CD4-positive, alpha-beta T cell (primary cell): ENCODE measurements at regions of chr16 and their contacts with region 1.

Region 1: DNA sequence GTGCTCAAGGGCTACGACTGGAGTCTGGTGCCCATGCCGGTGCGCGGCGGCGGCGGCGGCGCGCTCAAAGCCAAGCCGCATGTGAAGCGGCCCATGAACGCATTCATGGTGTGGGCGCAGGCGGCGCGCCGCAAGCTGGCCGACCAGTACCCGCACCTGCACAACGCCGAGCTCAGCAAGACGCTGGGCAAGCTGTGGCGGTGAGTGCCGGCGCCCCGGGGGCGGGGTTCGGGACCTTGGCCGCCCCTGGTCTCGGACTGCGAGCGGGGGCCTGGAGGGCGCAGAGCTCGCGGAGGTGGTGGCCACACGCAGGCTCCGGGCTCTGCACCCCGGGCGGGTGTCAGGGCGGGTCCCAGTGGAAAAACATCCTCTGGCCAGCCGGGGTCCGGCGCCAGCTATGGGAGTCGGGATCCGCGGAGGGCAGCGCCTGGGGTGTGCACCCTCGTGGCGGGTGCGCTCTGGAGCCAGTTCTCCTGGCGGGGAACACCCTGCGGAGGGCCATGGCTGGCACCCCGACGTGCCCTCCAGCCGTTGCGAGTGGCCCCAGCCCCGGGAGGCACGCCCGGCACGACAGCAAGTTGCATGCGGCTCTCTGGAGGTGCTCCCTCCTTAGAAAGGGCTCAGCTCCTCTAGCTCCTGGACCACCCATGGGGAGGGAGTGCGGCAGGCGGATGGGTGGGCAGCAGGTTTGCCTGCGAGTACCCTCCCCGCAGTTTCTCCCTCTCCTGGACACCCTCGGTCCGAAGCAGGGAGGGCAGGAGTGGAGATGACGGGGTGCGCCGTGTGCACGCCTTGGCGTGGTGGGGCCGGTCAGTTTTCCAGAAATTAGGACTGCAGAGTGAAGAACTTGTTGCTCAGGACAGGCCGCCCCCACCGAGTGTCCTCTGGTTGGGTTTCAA is 824 bp downstream of the SOX8 start:
- DNase-seq: peak in 3 of 14 experiments; percentile 45 to 61 (median 60)
- ATAC-seq: peak; percentile 22
- H3K4me3 ChIP-seq: peak overlapping the region; percentile 20
- H3K4me3 Mint-ChIP-seq: peak overlapping the region; percentile 79
- H3K27ac ChIP-seq: no peak overlapping the region
- H3K27ac Mint-ChIP-seq: no peak overlapping the region
- H3K4me1 ChIP-seq: peaks cover 29% of the 10 kb centered on the region
- H3K4me1 Mint-ChIP-seq: peaks cover 7% of the 10 kb centered on the region
- H3K27me3 ChIP-seq: peaks cover 0 to 10% of the 10 kb centered on the region in 2 experiments
- H3K27me3 Mint-ChIP-seq: no peaks in the 10 kb centered on the region
- CTCF ChIP-seq: no peak

Region 2: DNA sequence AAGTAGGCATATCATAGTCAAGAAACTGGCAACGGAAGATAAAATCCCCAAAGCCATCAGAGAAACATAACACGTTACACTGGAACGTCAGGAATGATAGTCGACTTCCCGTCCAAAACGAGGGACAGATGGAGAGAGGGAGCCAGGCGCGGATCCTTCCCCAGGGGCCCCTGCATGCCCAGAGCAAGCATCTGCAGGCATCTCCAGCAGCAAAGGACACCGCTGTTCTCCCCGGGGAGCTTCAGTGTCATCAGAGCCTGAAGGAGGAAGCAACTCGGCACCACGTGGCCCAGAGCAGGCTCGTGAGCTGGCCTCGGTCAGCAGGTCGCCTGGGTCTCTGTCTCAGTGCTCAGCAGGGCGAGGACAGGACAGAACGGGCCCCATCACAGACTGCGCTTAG is 61.7 kb before region 1 on chr16:
- CTCF ChIA-PET with region 1: no interaction called
- POLR2A ChIA-PET with region 1: no interaction called
- intact Hi-C with region 1: no loop called
- DNase-seq: no peak
- ATAC-seq: no peak
- H3K4me3 ChIP-seq: no peak overlapping the region
- H3K4me3 Mint-ChIP-seq: no peak overlapping the region
- H3K27ac ChIP-seq: no peak overlapping the region
- H3K27ac Mint-ChIP-seq: no peak overlapping the region
- H3K4me1 ChIP-seq: no peaks in the 10 kb centered on the region
- H3K4me1 Mint-ChIP-seq: no peaks in the 10 kb centered on the region
- H3K27me3 ChIP-seq: no peaks in the 10 kb centered on the region
- H3K27me3 Mint-ChIP-seq: no peaks in the 10 kb centered on the region
- CTCF ChIP-seq: no peak

Region 3: GRCh38 chr16:951660-952301 is 30.6 kb before region 1 on chr16:
- CTCF ChIA-PET with region 1: no interaction called
- POLR2A ChIA-PET with region 1: no interaction called
- intact Hi-C with region 1: no loop called
- DNase-seq: no peak
- ATAC-seq: no peak
- H3K4me3 ChIP-seq: no peak overlapping the region
- H3K4me3 Mint-ChIP-seq: no peak overlapping the region
- H3K27ac ChIP-seq: no peak overlapping the region
- H3K27ac Mint-ChIP-seq: no peak overlapping the region
- H3K4me1 ChIP-seq: peaks cover 3% of the 10 kb centered on the region
- H3K4me1 Mint-ChIP-seq: peaks cover 10% of the 10 kb centered on the region
- H3K27me3 ChIP-seq: no peaks in the 10 kb centered on the region
- H3K27me3 Mint-ChIP-seq: no peaks in the 10 kb centered on the region
- CTCF ChIP-seq: no peak

Region 4: DNA sequence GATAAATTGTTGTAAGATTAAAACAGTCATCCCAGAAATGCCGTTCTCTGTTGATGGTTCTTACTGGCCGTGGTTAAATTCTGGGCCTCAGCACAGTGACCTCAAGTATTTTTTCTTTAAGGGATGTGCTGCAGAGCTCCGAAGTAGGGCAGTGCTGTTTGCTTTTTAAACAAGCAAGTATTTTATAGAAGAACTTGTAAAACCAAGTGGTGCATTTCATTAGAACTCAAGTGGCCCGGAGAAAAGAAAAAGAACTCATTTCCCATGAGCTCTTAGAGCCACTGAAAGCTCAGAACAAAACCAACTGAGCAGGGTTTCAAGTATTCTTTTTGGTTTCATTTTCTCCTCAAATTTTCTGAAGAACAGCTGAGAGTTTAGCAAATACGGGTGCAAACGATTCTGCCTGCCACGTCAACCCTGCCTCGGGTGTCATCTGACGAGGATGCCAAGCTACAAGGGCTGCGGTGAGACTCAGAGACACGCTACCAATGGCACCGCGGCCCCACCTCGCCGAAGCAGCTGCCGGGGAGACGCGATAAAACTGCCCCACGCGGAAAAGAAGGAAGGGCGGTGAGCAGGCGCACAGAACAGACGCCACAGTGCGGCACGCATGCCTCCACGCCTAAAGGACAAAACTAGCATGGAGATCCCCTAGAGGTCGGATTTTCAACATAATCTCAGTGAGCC is 17.9 kb before region 1 on chr16:
- CTCF ChIA-PET with region 1: no interaction called
- POLR2A ChIA-PET with region 1: interaction called, 49 read pairs
- intact Hi-C with region 1: no loop called
- DNase-seq: peak; percentile 69 to 96 (median 73)
- ATAC-seq: peak; percentile 92
- H3K4me3 ChIP-seq: peak overlapping the region; percentile 49
- H3K4me3 Mint-ChIP-seq: peak overlapping the region; percentile 81
- H3K27ac ChIP-seq: peak overlapping the region; percentile 32 to 61
- H3K27ac Mint-ChIP-seq: peak overlapping the region; percentile 84
- H3K4me1 ChIP-seq: peaks cover 45% of the 10 kb centered on the region
- H3K4me1 Mint-ChIP-seq: peaks cover 52% of the 10 kb centered on the region
- H3K27me3 ChIP-seq: no peaks in the 10 kb centered on the region
- H3K27me3 Mint-ChIP-seq: no peaks in the 10 kb centered on the region
- CTCF ChIP-seq: no peak

Region 5: DNA sequence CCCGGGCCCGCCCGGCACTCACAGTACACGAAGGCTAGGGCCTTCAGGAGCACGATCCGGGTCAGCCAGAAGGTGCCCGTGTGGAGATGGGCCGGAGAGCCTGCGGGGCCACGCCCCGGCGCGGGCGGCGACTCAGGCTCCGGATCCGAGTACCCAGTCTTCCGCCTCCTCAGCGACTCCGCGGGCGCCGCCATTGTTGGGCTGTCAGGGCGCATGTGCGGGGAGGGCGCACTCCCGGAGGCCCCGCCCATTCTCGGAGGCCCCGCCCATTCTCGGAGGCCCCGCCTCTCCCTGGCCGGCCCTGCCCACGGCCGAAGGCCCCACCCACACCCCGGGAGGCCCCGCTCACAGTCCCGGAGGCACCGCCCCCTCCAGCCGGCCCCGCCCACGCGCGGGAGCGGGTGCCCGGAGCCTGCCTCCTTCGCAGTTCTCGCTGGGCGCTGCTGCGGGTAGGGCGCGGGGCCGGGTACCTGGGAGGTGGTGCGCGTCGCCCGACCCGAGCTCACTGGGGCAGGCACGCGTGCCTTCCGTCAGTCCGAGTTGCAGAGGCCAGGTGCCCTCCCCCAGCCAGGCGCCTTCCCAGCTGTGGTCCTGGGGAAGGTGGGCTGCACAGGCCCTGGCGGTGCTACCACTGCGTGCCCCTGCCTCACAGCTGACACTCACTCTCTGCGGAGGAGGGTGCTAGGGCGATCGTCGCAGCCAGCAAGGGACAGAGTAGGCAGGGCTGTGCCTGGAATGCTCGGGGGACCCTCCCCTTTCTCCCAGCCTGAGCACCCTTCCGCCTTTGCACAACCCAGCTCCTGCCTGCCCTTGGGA is 11.4 kb before region 1 on chr16 and contains the start of gene LMF1:
- CTCF ChIA-PET with region 1: no interaction called
- POLR2A ChIA-PET with region 1: interaction called, 49 read pairs
- intact Hi-C with region 1: loop called in 1 of 2 experiments (anchors 1 kb)
- DNase-seq: peak; percentile 92 to 100 (median 96)
- ATAC-seq: peak; percentile 96
- H3K4me3 ChIP-seq: peak within 1 kb of the TSS; percentile 66
- H3K4me3 Mint-ChIP-seq: peak within 1 kb of the TSS; percentile 90
- H3K27ac ChIP-seq: peak within 1 kb of the TSS; percentile 44 to 53
- H3K27ac Mint-ChIP-seq: peak within 1 kb of the TSS; percentile 66
- H3K4me1 ChIP-seq: peaks cover 30% of the 10 kb centered on the region
- H3K4me1 Mint-ChIP-seq: peaks cover 27% of the 10 kb centered on the region
- H3K27me3 ChIP-seq: no peaks in the 10 kb centered on the region
- H3K27me3 Mint-ChIP-seq: no peaks in the 10 kb centered on the region
- CTCF ChIP-seq: no peak
- total RNA-seq, gene LMF1: 26.8 to 27.6 TPM

Region 6: GRCh38 chr16:997440-998051 is 15.2 kb after region 1 on chr16:
- CTCF ChIA-PET with region 1: no interaction called
- POLR2A ChIA-PET with region 1: interaction called, 78 read pairs
- intact Hi-C with region 1: no loop called
- DNase-seq: peak; percentile 27 to 84 (median 63)
- ATAC-seq: peak; percentile 78
- H3K4me3 ChIP-seq: peak overlapping the region; percentile 67
- H3K4me3 Mint-ChIP-seq: peak overlapping the region; percentile 88
- H3K27ac ChIP-seq: peak overlapping the region; percentile 57 to 80
- H3K27ac Mint-ChIP-seq: peak overlapping the region; percentile 88
- H3K4me1 ChIP-seq: peaks cover 75% of the 10 kb centered on the region
- H3K4me1 Mint-ChIP-seq: peaks cover 44% of the 10 kb centered on the region
- H3K27me3 ChIP-seq: no peaks in the 10 kb centered on the region
- H3K27me3 Mint-ChIP-seq: no peaks in the 10 kb centered on the region
- CTCF ChIP-seq: no peak

Region 7: DNA sequence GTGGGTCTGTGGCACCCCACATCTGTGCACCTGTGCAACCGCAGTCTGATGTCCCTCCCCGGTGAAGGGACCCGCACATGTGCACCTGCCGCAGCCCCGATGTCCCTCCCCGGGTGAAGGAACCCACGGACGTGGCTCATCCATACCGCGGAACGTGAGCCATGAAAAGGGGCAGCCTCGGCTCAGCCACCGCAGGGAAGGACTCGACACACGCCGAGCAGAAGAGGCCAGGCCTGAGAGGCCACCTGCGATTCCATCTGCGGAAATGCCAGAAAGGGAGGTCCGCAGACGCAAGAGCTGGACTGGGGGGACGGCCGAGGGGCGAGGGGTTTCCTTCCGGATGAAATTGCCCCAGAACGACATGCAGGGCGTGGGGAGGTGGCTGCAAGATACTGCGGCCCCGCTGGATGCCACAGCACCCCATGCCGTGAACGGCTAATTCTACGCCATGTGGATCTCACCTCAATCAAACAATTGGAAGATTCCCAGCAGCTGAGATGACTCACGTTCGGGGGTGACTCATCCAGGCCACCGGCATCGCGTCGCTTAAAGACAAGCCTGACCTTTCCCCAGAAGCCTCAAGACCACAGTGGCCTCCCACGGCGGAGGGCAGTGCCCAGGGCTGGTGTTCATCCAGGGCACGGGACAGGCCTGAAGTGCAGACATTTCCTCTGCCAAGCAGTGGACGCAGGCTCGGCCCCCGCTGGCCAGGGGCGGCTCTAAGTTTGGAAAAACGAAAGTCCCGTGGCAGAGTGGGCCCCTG is 20.2 kb after region 1 on chr16:
- CTCF ChIA-PET with region 1: no interaction called
- POLR2A ChIA-PET with region 1: interaction called, 78 read pairs
- intact Hi-C with region 1: no loop called
- DNase-seq: peak in 13 of 14 experiments; percentile 46 to 87 (median 65)
- ATAC-seq: peak; percentile 32
- H3K4me3 ChIP-seq: no peak overlapping the region
- H3K4me3 Mint-ChIP-seq: peak overlapping the region; percentile 54
- H3K27ac ChIP-seq: no peak overlapping the region
- H3K27ac Mint-ChIP-seq: peak overlapping the region; percentile 69
- H3K4me1 ChIP-seq: peaks cover 87% of the 10 kb centered on the region
- H3K4me1 Mint-ChIP-seq: peaks cover 50% of the 10 kb centered on the region
- H3K27me3 ChIP-seq: no peaks in the 10 kb centered on the region
- H3K27me3 Mint-ChIP-seq: no peaks in the 10 kb centered on the region
- CTCF ChIP-seq: no peak

Region 8: GRCh38 chr16:1723450-1724147 is 741.2 kb after region 1 on chr16:
- CTCF ChIA-PET with region 1: no interaction called
- POLR2A ChIA-PET with region 1: no interaction called
- intact Hi-C with region 1: no loop called
- DNase-seq: peak in 12 of 14 experiments; percentile 14 to 70 (median 39)
- ATAC-seq: peak; percentile 41
- H3K4me3 ChIP-seq: no peak overlapping the region
- H3K4me3 Mint-ChIP-seq: peak overlapping the region; percentile 5
- H3K27ac ChIP-seq: no peak overlapping the region
- H3K27ac Mint-ChIP-seq: peak overlapping the region; percentile 61
- H3K4me1 ChIP-seq: peaks cover 51% of the 10 kb centered on the region
- H3K4me1 Mint-ChIP-seq: peaks cover 45% of the 10 kb centered on the region
- H3K27me3 ChIP-seq: no peaks in the 10 kb centered on the region
- H3K27me3 Mint-ChIP-seq: no peaks in the 10 kb centered on the region
- CTCF ChIP-seq: peak; percentile 91